Activated CD4-positive, alpha-beta T cell treated with anti-CD3 and anti-CD28 coated beads for 36 hours (primary cell): ENCODE measurements at regions of chr15 and their contacts with region 1.

Region 1: GRCh38 chr15:90716976-90717821 is at the start of gene BLM:
- DNase-seq: peak; percentile 96
- ATAC-seq: peak; percentile 100
- H3K4me3 Mint-ChIP-seq: peak within 1 kb of the TSS; percentile 80
- H3K27ac Mint-ChIP-seq: peak within 1 kb of the TSS; percentile 83
- H3K4me1 Mint-ChIP-seq: peaks cover 17% of the 10 kb centered on the region
- H3K27me3 Mint-ChIP-seq: no peaks in the 10 kb centered on the region
- total RNA-seq, gene BLM: 59.5 to 73.7 TPM

Region 2: DNA sequence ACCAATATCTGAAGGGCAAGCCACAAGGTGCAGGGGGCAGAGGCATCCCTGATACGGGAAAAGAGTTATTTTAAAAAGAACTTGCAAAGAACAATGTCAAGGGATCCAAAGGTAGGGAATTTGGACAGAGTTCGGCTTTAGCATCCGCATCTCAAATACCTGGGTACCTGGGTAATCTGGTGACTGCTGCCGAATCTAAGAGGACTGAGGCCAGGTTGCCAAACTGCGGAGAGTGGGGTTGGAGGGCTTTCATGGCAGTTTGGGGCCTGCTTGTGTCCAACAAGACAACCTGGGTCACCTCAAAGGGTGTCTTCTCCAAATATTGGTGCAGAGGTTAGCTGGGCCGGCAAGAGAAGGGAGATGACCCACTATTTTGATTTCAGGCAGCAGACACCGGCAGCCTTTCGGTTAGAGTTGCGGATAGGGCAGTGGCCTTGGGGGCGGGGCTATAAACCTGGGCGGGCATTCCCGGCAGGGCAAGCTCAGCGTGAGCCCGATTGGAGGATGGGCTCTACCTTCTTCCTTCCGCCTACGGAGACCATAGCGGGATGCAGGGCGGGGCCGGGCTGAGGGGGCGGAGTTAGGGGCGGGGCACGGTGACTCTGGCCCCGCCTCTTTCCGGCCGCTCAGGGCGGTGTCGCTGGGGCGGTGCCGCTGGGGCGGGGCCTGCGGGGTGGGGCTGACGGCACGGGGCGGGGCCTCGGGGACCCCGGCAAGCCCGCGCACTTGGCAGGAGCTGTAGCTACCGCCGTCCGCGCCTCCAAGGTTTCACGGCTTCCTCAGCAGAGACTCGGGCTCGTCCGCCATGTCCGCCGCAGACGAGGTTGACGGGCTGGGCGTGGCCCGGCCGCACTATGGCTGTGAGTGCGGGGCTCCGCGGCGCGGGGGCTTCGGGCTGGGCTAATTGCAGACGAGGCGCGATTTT is 329.4 kb before region 1 on chr15 and contains the start of gene IQGAP1:
- CTCF ChIA-PET with region 1: no interaction called
- POLR2A ChIA-PET with region 1: interaction called, 3 read pairs
- intact Hi-C with region 1: loop called in 1 of 2 experiments (anchors 1 kb)
- DNase-seq: peak; percentile 99
- ATAC-seq: peak; percentile 95
- H3K4me3 Mint-ChIP-seq: peak within 1 kb of the TSS; percentile 87
- H3K27ac Mint-ChIP-seq: peak within 1 kb of the TSS; percentile 90
- H3K4me1 Mint-ChIP-seq: peaks cover 44% of the 10 kb centered on the region
- H3K27me3 Mint-ChIP-seq: no peaks in the 10 kb centered on the region
- total RNA-seq, gene IQGAP1: 181 to 334 TPM

Region 3: GRCh38 chr15:90648137-90649070 is 68.8 kb before region 1 on chr15:
- CTCF ChIA-PET with region 1: interaction called, 5 read pairs
- POLR2A ChIA-PET with region 1: interaction called, 9 read pairs
- intact Hi-C with region 1: loop called (anchors 1 kb)
- DNase-seq: peak; percentile 78
- ATAC-seq: peak; percentile 82
- H3K4me3 Mint-ChIP-seq: peak overlapping the region; percentile 39
- H3K27ac Mint-ChIP-seq: peak overlapping the region; percentile 93
- H3K4me1 Mint-ChIP-seq: peaks cover 28% of the 10 kb centered on the region
- H3K27me3 Mint-ChIP-seq: no peaks in the 10 kb centered on the region

Region 4: DNA sequence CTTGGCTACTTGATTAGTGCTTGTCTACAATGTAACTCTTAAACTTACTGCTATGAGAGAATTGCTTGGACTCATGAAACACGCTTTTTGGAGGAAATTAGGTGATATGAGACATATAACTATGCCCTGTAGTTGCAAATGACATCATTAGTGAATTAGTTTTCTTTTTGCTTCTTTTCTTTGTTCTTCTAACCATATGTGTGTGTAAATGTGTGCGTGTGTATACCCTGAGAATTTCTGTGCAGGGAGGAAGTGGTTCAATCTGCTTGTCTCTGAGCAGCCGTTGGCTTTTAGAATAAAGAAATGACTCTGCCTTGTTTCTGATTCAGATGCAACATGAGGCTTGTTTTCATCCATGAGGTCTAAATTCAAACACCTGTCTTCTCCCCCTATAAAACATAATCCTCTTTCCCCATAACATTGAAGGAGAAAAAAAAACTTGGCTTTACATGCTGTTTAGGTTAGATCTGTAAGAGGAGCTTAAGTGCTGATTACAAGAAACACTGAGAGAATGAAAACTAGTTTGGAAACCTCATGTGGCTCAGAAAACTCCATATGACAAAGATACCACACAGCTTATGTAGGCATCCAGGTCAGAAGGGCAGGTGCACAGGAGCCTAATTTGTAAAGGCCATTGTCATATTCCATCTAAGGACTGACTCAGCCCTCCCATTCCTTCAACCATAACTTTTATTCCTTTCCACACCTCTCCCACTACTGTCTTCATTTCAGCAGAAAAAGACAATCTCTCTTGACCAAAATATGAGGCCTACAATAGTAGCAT is 30.6 kb before region 1 on chr15:
- CTCF ChIA-PET with region 1: interaction called, 5 read pairs
- POLR2A ChIA-PET with region 1: no interaction called
- intact Hi-C with region 1: loop called in 1 of 2 experiments (anchors 2 kb)
- DNase-seq: peak; percentile 50
- ATAC-seq: peak; percentile 95
- H3K4me3 Mint-ChIP-seq: peak overlapping the region; percentile 11
- H3K27ac Mint-ChIP-seq: peak overlapping the region; percentile 90
- H3K4me1 Mint-ChIP-seq: peaks cover 31% of the 10 kb centered on the region
- H3K27me3 Mint-ChIP-seq: peaks cover 6% of the 10 kb centered on the region

Region 5: DNA sequence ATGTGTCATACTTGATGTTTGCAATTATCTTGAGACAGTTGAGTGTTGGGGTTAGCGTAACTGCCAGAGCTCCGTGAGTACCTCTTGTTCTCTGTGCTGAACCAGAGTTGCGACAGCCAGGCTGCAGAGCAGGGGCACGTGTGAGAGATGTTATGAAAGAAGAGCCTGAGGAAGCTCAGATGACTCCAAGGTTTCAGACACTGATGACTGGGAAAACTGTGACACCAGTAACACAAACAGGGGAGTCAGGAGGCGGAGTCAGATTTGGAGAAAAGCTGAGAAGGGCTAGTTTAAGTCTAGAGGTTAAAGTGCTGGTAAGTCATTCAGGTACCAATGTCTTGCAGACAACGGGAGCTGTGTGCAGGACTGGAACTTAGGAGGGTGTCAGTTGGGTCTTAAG is 44.9 kb after region 1 on chr15:
- CTCF ChIA-PET with region 1: interaction called, 3 read pairs
- POLR2A ChIA-PET with region 1: no interaction called
- intact Hi-C with region 1: loop called in 1 of 2 experiments (anchors 5 kb)
- DNase-seq: no peak
- ATAC-seq: no peak
- H3K4me3 Mint-ChIP-seq: no peak overlapping the region
- H3K27ac Mint-ChIP-seq: no peak overlapping the region
- H3K4me1 Mint-ChIP-seq: no peaks in the 10 kb centered on the region
- H3K27me3 Mint-ChIP-seq: no peaks in the 10 kb centered on the region

Region 6: DNA sequence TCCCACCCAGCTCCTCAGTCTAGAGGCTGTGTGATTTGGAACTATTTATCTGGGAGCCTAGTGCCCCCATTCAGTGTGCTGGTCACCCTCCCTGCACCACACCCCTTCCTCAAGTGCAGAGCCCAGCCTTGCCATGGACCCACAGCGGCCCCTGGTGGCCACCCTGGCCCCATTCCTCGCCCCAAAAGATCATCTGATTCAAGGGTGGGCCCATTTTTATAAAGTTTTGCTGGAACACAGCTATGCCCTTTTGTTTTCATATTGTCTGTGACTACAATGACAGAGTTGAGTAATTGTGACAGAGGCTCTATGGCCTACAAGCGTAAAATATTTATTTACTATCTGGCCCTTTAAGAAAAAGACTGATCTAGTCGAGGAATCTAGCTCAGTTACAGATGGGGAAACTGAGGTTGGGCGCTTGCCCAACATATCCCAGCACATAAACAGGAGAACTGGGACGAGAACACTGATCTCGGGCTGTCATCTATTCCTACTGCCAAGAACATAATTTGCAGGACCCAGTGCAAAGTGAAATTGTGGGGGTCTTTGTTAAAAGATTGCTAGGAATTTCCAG is 168.9 kb after region 1 on chr15:
- CTCF ChIA-PET with region 1: interaction called, 8 read pairs
- POLR2A ChIA-PET with region 1: interaction called, 3 read pairs
- intact Hi-C with region 1: loop called in 1 of 2 experiments (anchors 1 kb)
- DNase-seq: peak; percentile 90
- ATAC-seq: peak; percentile 43
- H3K4me3 Mint-ChIP-seq: no peak overlapping the region
- H3K27ac Mint-ChIP-seq: peak overlapping the region; percentile 31
- H3K4me1 Mint-ChIP-seq: peaks cover 12% of the 10 kb centered on the region
- H3K27me3 Mint-ChIP-seq: peaks cover 3% of the 10 kb centered on the region

Region 7: DNA sequence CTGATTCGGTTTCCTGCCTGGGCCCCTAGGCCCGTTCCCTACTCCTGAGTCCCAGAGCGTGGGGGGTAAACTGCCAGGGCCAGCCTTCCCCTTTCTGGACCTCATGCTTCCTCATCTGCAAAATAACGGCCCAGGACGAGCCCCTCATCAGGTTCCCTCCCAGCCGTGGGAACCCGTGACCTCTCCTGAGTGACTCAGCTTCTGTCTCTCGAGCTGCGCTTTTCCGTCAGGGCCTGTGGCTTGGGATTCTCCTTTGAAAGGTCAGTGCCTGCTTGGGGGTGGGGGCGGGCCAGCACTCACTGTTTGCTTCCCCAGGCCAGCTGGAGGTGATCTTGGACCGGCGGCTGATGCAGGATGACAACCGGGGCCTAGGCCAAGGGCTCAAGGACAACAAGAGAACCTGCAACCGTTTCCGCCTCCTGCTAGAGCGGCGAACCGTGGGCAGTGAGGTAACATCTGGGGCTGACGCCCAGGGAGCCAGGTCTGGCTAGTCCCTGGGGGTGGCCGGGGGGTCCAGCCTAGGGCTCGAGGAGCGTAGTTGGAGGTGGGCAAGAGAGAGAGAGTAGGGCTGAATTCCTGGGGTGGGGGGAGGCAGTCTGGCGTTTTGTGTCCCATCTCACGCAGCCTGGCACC is 198.7 kb after region 1 on chr15:
- CTCF ChIA-PET with region 1: no interaction called
- POLR2A ChIA-PET with region 1: no interaction called
- intact Hi-C with region 1: no loop called
- DNase-seq: no peak
- ATAC-seq: no peak
- H3K4me3 Mint-ChIP-seq: no peak overlapping the region
- H3K27ac Mint-ChIP-seq: no peak overlapping the region
- H3K4me1 Mint-ChIP-seq: no peaks in the 10 kb centered on the region
- H3K27me3 Mint-ChIP-seq: no peaks in the 10 kb centered on the region

Region 8: DNA sequence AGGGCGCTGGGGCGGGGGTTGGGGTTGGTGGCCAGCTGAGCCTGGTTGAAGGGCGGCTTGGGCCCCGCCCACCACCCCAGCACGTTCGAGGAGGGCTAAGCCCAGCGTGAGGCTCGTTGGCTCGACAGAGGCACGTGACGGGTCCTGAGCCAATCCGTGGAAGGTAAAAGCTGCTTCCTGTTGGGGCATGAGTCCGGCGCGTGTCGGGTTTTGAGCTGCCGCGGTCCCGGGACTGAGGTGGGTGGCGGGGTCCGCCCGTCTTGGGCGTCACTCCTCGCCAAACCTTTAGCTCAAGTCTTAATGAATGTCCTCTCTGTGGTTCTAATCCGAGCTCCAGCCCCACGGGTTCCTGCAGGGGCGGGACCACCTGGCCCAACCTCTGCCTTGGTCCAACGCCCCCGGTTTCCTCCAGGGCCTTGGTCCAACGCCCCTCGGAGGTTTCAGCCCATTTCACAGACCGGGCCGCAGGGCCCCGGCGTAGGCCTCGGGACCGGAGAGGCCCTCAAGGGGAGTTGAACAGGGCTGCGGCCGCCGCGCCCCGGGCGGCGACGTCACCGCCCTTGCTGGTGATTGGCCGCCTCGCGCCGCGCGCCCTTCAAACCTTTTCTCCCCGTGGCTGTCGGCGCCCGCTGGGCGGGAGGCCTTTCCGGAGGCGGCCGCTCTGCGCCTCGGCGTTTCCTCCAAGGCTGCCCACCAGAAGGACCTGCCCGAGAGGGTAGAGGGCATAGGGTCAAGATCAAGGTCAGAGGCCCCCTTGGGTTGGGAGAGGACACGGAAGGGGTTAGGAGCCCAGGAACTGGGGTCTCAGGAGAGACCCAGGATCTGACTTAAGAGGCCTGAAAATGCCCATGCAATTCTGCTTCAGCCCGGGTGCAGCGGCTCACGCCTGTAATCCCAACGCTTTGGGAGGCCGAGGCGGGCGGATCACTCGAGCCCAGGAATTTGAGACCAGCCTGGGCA is 237.8 kb after region 1 on chr15 and contains the start of gene RCCD1:
- CTCF ChIA-PET with region 1: interaction called, 3 read pairs
- POLR2A ChIA-PET with region 1: interaction called, 4 read pairs
- intact Hi-C with region 1: loop called in 1 of 2 experiments (anchors 1 kb)
- DNase-seq: peak; percentile 94
- ATAC-seq: peak; percentile 95
- H3K4me3 Mint-ChIP-seq: peak within 1 kb of the TSS; percentile 84
- H3K27ac Mint-ChIP-seq: peak within 1 kb of the TSS; percentile 95
- H3K4me1 Mint-ChIP-seq: peaks cover 13% of the 10 kb centered on the region
- H3K27me3 Mint-ChIP-seq: no peaks in the 10 kb centered on the region
- total RNA-seq, gene RCCD1: 28.9 to 37.4 TPM

Region 9: GRCh38 chr15:91032919-91033803 is 316.0 kb after region 1 on chr15:
- CTCF ChIA-PET with region 1: no interaction called
- POLR2A ChIA-PET with region 1: no interaction called
- intact Hi-C with region 1: no loop called
- DNase-seq: peak; percentile 82
- ATAC-seq: peak; percentile 91
- H3K4me3 Mint-ChIP-seq: no peak overlapping the region
- H3K27ac Mint-ChIP-seq: no peak overlapping the region
- H3K4me1 Mint-ChIP-seq: no peaks in the 10 kb centered on the region
- H3K27me3 Mint-ChIP-seq: peaks cover 2% of the 10 kb centered on the region

Region 10: GRCh38 chr15:91142114-91142731 is 425.0 kb after region 1 on chr15:
- CTCF ChIA-PET with region 1: no interaction called
- POLR2A ChIA-PET with region 1: no interaction called
- intact Hi-C with region 1: no loop called
- DNase-seq: no peak
- ATAC-seq: no peak
- H3K4me3 Mint-ChIP-seq: no peak overlapping the region
- H3K27ac Mint-ChIP-seq: no peak overlapping the region
- H3K4me1 Mint-ChIP-seq: no peaks in the 10 kb centered on the region
- H3K27me3 Mint-ChIP-seq: peaks cover 33% of the 10 kb centered on the region

Region 11: DNA sequence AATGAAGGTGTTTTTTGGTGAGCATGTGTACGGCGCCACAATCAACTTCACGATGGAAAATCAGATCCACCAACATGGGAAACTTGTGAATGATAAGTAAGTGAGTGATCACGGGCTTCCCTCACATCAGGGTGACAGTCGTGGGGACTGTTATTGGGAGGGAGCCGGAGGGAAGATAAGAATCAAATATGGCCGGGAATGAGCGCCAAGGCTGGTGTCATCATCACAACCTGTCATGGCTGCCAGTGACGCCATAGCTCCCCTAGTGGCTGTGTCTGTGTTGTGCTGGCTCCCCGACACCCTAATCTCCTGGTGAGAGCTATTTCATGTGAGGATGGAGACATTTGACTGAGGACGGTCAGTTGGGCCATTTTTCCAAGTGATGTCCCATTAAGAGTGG is 551.3 kb after region 1 on chr15:
- CTCF ChIA-PET with region 1: no interaction called
- POLR2A ChIA-PET with region 1: no interaction called
- intact Hi-C with region 1: no loop called
- DNase-seq: peak; percentile 54
- ATAC-seq: peak; percentile 39
- H3K4me3 Mint-ChIP-seq: no peak overlapping the region
- H3K27ac Mint-ChIP-seq: no peak overlapping the region
- H3K4me1 Mint-ChIP-seq: peaks cover 2% of the 10 kb centered on the region
- H3K27me3 Mint-ChIP-seq: peaks cover 9% of the 10 kb centered on the region